ENCODE measurements at regions of chr5 and their contacts with region 1.

Region 1: DNA sequence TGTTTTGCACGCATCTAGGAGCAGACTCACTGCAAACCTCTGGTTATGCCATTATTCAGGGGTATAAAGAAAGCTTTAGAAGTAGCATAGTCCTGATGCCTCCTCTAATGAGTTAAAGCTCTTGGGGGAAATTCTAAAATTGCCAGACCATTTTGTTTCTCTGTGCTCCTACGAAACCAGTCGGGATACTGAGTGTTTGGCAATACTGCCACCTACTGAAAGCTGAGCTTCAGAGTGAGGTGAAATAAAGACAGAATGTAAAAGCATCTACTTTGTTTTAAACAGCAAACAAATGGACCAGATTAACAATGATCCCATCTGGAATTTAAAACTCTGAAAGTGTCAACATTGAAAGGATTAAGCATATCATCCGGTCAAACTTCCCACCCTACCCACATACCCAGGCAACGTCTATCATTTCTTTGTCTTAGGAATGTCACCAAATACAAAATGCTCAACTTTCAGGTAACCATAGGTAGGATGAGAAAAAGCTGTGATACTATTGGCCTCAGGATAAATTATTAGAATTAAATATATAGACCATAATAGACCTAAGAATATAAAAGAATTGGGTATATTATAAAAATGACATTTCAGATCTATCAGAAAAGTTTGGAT is 77.8 kb upstream of the SHISAL2B start:
- DNase-seq: peak; percentile 48
- H3K4me3 ChIP-seq: no peak overlapping the region
- H3K27ac ChIP-seq: no peak overlapping the region
- H3K4me1 ChIP-seq: no peaks in the 10 kb centered on the region
- H3K27me3 ChIP-seq: no peaks in the 10 kb centered on the region
- CTCF ChIP-seq: peak; percentile 33 to 71 (median 55)
- POLR2A ChIP-seq: no peak

Region 2: GRCh38 chr5:64074533-64074932 is 537.9 kb before region 1 on chr5:
- intact Hi-C with region 1: loop called (anchors 10 kb)
- DNase-seq: no peak
- H3K4me3 ChIP-seq: no peak overlapping the region
- H3K27ac ChIP-seq: no peak overlapping the region
- H3K4me1 ChIP-seq: no peaks in the 10 kb centered on the region
- H3K27me3 ChIP-seq: no peaks in the 10 kb centered on the region
- CTCF ChIP-seq: peak in 3 of 4 experiments; percentile 31 to 47 (median 47)
- POLR2A ChIP-seq: no peak

Region 3: DNA sequence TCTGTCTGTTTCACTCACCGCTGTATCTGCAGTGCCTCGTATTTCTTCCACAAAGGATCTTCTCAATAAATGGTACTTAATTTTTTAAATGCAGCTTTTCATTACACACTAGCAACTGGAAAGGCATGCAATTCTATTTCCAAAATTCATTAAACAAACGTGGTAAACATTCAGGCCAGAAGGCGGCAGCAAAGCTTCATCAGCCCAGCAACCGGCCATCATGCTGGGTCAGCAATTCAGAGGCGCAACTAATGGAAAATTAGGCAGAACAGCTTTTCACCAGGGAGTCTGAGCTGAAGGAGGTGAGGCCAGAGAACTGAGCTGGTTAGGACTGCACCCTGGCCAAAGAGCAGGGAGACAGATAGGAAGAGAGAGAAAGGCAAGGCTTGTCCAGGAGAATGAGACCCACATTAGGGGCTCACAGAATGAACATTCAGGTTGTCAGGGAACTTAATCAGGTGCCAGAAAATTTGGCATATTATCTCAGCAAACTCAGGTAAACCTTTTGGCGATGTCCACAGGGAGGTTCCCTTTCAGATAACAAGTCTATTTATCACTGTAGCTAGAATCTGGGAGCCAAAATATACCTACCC is 464.5 kb before region 1 on chr5:
- intact Hi-C with region 1: loop called (anchors 5 kb)
- DNase-seq: peak; percentile 57
- H3K4me3 ChIP-seq: no peak overlapping the region
- H3K27ac ChIP-seq: no peak overlapping the region
- H3K4me1 ChIP-seq: no peaks in the 10 kb centered on the region
- H3K27me3 ChIP-seq: no peaks in the 10 kb centered on the region
- CTCF ChIP-seq: peak; percentile 16 to 87 (median 70)
- POLR2A ChIP-seq: no peak

Region 4: GRCh38 chr5:64229163-64229774 is 383.2 kb before region 1 on chr5:
- intact Hi-C with region 1: loop called (anchors 5 kb)
- DNase-seq: no peak
- H3K4me3 ChIP-seq: no peak overlapping the region
- H3K27ac ChIP-seq: no peak overlapping the region
- H3K4me1 ChIP-seq: no peaks in the 10 kb centered on the region
- H3K27me3 ChIP-seq: no peaks in the 10 kb centered on the region
- CTCF ChIP-seq: peak; percentile 25 to 72 (median 67)
- POLR2A ChIP-seq: no peak

Region 5: GRCh38 chr5:64576250-64576649 is 36.2 kb before region 1 on chr5:
- intact Hi-C with region 1: no loop called
- DNase-seq: no peak
- H3K4me3 ChIP-seq: no peak overlapping the region
- H3K27ac ChIP-seq: no peak overlapping the region
- H3K4me1 ChIP-seq: no peaks in the 10 kb centered on the region
- H3K27me3 ChIP-seq: no peaks in the 10 kb centered on the region
- CTCF ChIP-seq: no peak
- POLR2A ChIP-seq: no peak

Measured in prostate gland (tissue), 2 donors.